ENCODE measurements at regions of chr20 and their contacts with region 1.

Region 1: DNA sequence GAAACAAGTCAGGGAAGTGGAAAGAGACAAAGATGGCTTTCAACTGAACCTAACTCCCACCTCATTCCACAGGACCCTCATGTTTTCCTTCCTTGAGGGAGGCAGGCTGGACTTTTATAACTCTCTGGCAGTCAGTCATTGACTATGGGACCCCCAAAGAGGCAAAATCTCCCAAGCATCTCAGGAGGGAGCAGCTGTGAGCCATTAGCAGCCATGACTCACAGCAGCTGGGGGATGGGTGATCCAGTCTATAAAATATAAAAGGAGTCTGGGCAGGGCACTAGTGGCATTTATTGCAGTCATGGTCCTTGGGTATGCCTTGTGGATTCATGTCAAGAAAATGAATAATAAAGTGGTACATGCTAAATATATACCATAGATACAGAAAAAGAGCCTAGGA is 387.0 kb upstream of the CHD6 start:
- DNase-seq: no peak
- H3K4me3 ChIP-seq: no peak overlapping the region
- H3K27ac ChIP-seq: no peak overlapping the region
- H3K4me1 ChIP-seq: peaks cover 0 to 7% (median 0%) of the 10 kb centered on the region in 4 experiments; a peak in 1 of 7 replicates
- H3K27me3 ChIP-seq: no peaks in the 10 kb centered on the region
- CTCF ChIP-seq: no peak
- EP300 ChIP-seq: no peak
- POLR2A ChIP-seq: no peak
- RAD21 ChIP-seq: no peak

Region 2: DNA sequence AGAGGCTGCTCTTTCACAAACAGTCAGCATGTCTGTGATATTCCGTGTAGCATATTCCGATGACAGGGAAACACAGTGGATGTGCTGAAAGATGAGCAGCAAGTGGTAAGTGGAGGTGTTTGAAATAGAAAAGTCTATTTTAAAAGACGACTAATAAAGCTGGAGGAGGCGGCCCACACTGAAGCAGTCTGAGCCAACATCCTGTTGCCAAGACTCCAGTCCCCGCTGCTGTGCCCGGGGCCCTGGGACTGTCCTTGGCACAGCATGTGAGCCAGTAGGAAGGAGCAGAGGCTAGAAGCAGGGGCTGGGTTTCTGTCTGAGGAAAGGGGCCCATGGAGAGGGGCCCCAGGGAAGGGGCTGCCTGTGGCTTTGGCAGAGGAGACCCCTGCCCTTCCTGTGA is 35.6 kb before region 1 on chr20:
- CTCF ChIA-PET with region 1: no interaction called
- POLR2A ChIA-PET with region 1: no interaction called
- DNase-seq: no peak
- H3K4me3 ChIP-seq: no peak overlapping the region
- H3K27ac ChIP-seq: no peak overlapping the region
- H3K4me1 ChIP-seq: peaks cover 0 to 5% (median 2%) of the 10 kb centered on the region in 4 experiments; a peak in 3 of 7 replicates
- H3K27me3 ChIP-seq: no peaks in the 10 kb centered on the region
- CTCF ChIP-seq: no peak
- EP300 ChIP-seq: no peak
- POLR2A ChIP-seq: no peak
- RAD21 ChIP-seq: no peak

Region 3: DNA sequence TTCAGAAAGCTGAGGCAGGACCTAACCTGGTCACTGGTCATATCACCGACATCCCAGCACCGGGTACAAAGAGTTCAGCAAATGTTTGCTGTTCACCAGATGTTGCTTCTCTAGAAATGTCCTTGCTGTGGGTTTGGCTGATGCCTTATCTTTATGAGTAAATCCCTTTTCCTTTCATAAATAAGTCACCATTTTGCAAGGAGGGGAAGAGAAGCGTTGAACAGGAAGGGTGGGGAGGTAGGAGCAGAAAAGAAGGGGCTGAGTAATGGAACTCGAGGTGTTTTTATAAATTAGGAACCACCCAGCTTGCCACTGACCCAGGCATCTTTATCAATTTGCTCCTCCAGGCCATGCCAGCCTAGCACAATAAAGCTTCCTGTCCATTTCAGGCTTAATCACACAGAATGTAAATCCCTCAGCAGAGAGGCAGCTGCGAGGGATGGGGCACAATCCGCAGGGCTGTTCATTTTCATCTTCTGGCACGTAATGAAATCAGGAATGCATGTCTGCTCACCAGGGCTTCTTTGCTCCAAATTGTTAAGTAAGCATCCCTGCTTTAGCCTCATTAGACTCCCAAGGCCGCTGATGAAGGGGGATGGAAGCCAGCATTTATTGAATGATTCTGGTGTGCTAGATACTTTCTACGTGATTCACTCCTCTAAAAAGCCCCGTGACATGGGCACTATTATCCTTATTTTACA is 15.1 kb before region 1 on chr20:
- CTCF ChIA-PET with region 1: no interaction called
- POLR2A ChIA-PET with region 1: no interaction called
- DNase-seq: no peak
- H3K4me3 ChIP-seq: no peak overlapping the region
- H3K27ac ChIP-seq: no peak overlapping the region
- H3K4me1 ChIP-seq: no peaks in the 10 kb centered on the region
- H3K27me3 ChIP-seq: no peaks in the 10 kb centered on the region
- CTCF ChIP-seq: no peak
- EP300 ChIP-seq: no peak
- POLR2A ChIP-seq: no peak
- RAD21 ChIP-seq: no peak

Region 4: DNA sequence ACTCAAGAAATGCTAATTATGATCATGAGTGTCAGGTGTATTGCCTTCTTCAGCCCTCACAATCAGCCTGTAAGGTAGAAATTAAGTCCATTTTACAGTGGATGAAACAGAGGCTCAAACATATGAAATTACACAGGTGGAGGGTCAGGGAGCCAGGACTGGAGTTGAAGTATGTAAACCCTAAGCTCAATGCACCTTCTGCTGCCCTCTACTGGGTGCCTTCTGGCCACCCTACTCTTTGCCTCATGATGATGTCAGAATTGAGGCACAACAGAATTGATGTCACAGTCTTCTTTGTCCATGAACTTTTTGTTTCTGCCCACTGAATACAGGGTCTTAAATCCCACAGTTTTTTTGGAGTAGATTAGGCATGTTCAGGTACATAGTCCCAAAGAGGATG is 13.7 kb after region 1 on chr20:
- CTCF ChIA-PET with region 1: interaction called, 13 read pairs
- POLR2A ChIA-PET with region 1: no interaction called
- DNase-seq: no peak
- H3K4me3 ChIP-seq: no peak overlapping the region
- H3K27ac ChIP-seq: no peak overlapping the region
- H3K4me1 ChIP-seq: no peaks in the 10 kb centered on the region
- H3K27me3 ChIP-seq: no peaks in the 10 kb centered on the region
- CTCF ChIP-seq: peak; percentile 40 to 73 (median 54)
- EP300 ChIP-seq: no peak
- POLR2A ChIP-seq: no peak
- RAD21 ChIP-seq: peak; percentile 68 to 69

Region 5: GRCh38 chr20:42229636-42230035 is 224.4 kb after region 1 on chr20:
- CTCF ChIA-PET with region 1: no interaction called
- POLR2A ChIA-PET with region 1: no interaction called
- DNase-seq: no peak
- H3K4me3 ChIP-seq: no peak overlapping the region
- H3K27ac ChIP-seq: no peak overlapping the region
- H3K4me1 ChIP-seq: no peaks in the 10 kb centered on the region
- H3K27me3 ChIP-seq: no peaks in the 10 kb centered on the region
- CTCF ChIP-seq: no peak
- EP300 ChIP-seq: no peak
- POLR2A ChIP-seq: no peak
- RAD21 ChIP-seq: no peak

Measured in H1 (cell line).